A673 (cell line): ENCODE measurements at regions of chr5 and their contacts with region 1.

Region 1: GRCh38 chr5:65880496-65881072 is 45.8 kb upstream of the ERBIN start:
- DNase-seq: no peak
- H3K4me3 ChIP-seq: no peak overlapping the region
- H3K27ac ChIP-seq: no peak overlapping the region
- H3K4me1 ChIP-seq: no peaks in the 10 kb centered on the region
- H3K27me3 ChIP-seq: no peaks in the 10 kb centered on the region
- CTCF ChIP-seq: no peak

Region 2: DNA sequence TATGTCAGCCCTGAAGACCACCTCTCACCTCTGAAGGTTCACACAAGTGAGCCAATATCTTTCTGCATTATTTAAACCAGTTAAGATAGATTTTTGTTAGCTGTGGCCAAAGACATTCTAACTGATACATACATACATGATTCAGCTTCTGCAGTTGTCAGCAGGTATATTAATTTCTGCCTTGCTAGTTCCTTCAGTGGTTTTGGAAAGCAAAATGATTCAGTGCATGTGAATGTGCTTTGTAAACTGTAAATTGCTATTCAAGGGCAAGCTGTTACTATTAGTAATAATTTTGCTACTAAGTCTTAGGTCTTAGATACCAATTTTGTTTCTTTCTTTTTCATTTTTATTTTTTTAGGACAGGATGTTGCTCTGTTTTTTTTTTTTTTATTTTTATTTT is 43.4 kb before region 1 on chr5:
- CTCF ChIA-PET with region 1: no interaction called
- POLR2A ChIA-PET with region 1: no interaction called
- intact Hi-C with region 1: loop called (anchors 1 kb)
- DNase-seq: no peak
- H3K4me3 ChIP-seq: no peak overlapping the region
- H3K27ac ChIP-seq: no peak overlapping the region
- H3K4me1 ChIP-seq: no peaks in the 10 kb centered on the region
- H3K27me3 ChIP-seq: no peaks in the 10 kb centered on the region
- CTCF ChIP-seq: no peak

Region 3: DNA sequence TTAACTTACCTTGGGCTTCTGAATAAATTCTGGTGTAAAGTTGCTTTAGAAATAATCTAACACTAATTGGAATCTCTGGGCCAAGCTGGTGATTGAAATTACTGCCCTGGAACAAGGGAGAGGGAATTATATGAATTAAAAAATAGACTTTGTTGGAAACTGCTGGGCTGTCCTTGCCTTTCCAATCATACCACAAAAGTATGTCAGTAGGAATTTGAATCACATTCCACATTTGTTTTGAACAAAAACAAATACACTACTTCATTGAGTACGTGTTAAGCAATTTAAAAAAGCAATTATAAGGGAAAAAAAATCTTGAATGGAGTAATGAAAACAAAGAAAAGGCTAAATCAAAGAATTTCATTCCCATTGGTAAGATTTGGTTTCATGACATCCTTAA is 161.0 kb after region 1 on chr5:
- CTCF ChIA-PET with region 1: no interaction called
- POLR2A ChIA-PET with region 1: no interaction called
- intact Hi-C with region 1: no loop called
- DNase-seq: no peak
- H3K4me3 ChIP-seq: no peak overlapping the region
- H3K27ac ChIP-seq: no peak overlapping the region
- H3K4me1 ChIP-seq: peaks cover 9% of the 10 kb centered on the region
- H3K27me3 ChIP-seq: no peaks in the 10 kb centered on the region
- CTCF ChIP-seq: no peak